Activated B cell treated with CpG ODN at 0.5 μM for 24 hours (primary cell): ENCODE measurements at regions of chr7 and their contacts with region 1.

Region 1: GRCh38 chr7:95527033-95527775 is 41.5 kb downstream of the ASB4 start:
- DNase-seq: no peak
- ATAC-seq: peak; percentile 68
- H3K4me3 Mint-ChIP-seq: no peak overlapping the region
- H3K27ac Mint-ChIP-seq: no peak overlapping the region
- H3K4me1 Mint-ChIP-seq: peaks cover 3% of the 10 kb centered on the region
- H3K27me3 Mint-ChIP-seq: peaks cover 5% of the 10 kb centered on the region
- CTCF ChIP-seq: no peak

Region 2: DNA sequence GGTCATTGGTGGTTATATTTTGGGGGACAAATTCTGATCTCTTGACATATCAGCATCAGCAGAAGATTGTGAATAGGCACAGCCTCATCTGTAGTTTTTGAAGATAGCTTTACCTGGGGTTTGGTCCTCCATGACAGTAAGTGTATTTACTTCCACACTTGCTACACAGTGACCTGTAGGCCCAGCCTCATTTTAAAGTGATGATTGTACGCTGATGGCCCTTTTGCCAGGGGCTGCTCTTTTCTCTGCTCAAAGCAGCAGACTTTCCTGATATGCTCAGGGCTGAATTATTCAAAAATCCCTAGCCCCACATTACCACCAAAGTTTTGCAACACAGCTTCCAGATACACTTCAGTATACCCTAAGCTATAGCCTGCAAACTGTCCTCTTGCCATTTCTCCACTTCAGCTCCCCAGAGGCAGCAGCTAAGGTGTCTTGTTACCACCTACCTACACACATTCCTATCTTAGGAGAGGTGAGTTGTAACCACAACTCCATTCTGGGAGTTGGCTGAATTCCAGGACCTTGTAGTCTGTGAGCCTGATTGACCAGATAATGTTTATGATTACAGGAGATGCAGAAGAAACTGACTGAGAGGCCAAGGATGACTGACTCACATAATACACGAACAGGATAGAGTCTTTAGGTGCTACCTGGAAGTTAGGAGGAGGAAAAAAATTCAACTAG is 35.4 kb before region 1 on chr7:
- CTCF ChIA-PET with region 1: no interaction called
- POLR2A ChIA-PET with region 1: no interaction called
- intact Hi-C with region 1: no loop called
- DNase-seq: no peak
- ATAC-seq: no peak
- H3K4me3 Mint-ChIP-seq: no peak overlapping the region
- H3K27ac Mint-ChIP-seq: no peak overlapping the region
- H3K4me1 Mint-ChIP-seq: no peaks in the 10 kb centered on the region
- H3K27me3 Mint-ChIP-seq: no peaks in the 10 kb centered on the region
- CTCF ChIP-seq: no peak

Region 3: GRCh38 chr7:95511716-95512260 is 15.4 kb before region 1 on chr7:
- CTCF ChIA-PET with region 1: interaction called, 19 read pairs
- POLR2A ChIA-PET with region 1: no interaction called
- intact Hi-C with region 1: loop called (anchors 1 kb)
- DNase-seq: peak; percentile 22
- ATAC-seq: peak; percentile 95
- H3K4me3 Mint-ChIP-seq: peak overlapping the region; percentile 21
- H3K27ac Mint-ChIP-seq: no peak overlapping the region
- H3K4me1 Mint-ChIP-seq: peaks cover 9% of the 10 kb centered on the region
- H3K27me3 Mint-ChIP-seq: peaks cover 8% of the 10 kb centered on the region
- CTCF ChIP-seq: no peak

Region 4: DNA sequence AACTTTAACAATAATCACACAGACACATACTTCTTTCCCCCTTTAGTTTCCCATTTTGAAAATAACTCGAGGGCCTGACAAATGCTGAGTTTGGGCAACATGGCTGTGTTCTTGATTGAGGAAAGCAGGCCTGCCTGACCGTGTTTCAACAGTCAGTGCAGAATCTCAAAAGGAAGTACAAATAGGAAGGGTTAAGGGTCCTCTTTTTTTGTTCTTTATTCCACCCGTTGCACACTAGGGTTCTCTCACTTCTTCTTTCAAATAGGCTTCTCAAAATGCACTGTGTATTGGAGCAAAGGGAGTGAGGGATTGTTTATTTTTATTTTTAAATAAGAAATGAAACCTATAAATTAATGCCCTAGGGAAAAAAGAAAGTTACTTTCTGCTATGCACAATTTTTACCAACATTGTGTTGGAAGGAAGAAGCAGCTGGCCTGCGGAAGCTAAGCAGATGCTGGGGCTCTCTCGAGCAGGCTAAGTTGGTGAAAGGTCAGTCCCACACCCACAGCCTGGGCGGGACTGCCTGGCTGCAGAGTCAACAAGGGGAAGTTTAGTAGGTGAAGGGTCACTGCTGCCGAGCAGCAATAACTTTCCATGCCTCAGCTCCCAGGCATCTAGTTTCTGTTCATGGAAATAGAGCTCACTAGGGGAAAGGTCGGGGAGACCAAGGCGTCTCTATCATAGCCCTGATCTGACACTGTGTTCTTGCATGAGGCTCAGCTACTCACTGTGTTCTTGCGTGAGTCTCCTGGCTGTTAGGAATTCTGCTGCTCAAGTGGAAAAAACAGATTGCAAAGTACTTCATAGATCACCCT is 81.4 kb after region 1 on chr7:
- CTCF ChIA-PET with region 1: no interaction called
- POLR2A ChIA-PET with region 1: no interaction called
- intact Hi-C with region 1: loop called (anchors 5 kb)
- DNase-seq: peak; percentile 49
- ATAC-seq: peak; percentile 89
- H3K4me3 Mint-ChIP-seq: peak overlapping the region; percentile 81
- H3K27ac Mint-ChIP-seq: peak overlapping the region; percentile 91
- H3K4me1 Mint-ChIP-seq: peaks cover 67% of the 10 kb centered on the region
- H3K27me3 Mint-ChIP-seq: no peaks in the 10 kb centered on the region
- CTCF ChIP-seq: no peak

Region 5: DNA sequence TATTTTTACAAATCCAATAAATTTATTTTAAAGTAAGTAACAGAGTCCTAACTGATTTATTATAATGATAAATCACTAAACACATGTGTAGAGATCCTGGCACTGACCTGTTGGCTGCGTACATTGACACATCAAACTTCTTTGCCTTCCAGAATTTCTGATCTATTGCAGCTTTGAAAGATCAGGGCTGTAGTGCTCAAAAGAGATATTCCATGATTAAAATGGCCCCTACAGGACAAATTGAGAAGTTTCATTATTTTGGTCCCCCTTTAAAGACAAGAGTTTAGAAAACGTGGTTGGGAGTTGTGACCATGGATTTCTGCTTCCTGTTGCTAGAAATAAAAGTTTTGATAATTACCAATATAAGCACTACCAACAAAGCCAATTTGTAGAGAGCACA is 156.8 kb after region 1 on chr7:
- CTCF ChIA-PET with region 1: interaction called, 324 read pairs
- POLR2A ChIA-PET with region 1: no interaction called
- intact Hi-C with region 1: loop called (anchors 1 kb)
- DNase-seq: no peak
- ATAC-seq: no peak
- H3K4me3 Mint-ChIP-seq: no peak overlapping the region
- H3K27ac Mint-ChIP-seq: no peak overlapping the region
- H3K4me1 Mint-ChIP-seq: no peaks in the 10 kb centered on the region
- H3K27me3 Mint-ChIP-seq: no peaks in the 10 kb centered on the region
- CTCF ChIP-seq: no peak

Region 6: DNA sequence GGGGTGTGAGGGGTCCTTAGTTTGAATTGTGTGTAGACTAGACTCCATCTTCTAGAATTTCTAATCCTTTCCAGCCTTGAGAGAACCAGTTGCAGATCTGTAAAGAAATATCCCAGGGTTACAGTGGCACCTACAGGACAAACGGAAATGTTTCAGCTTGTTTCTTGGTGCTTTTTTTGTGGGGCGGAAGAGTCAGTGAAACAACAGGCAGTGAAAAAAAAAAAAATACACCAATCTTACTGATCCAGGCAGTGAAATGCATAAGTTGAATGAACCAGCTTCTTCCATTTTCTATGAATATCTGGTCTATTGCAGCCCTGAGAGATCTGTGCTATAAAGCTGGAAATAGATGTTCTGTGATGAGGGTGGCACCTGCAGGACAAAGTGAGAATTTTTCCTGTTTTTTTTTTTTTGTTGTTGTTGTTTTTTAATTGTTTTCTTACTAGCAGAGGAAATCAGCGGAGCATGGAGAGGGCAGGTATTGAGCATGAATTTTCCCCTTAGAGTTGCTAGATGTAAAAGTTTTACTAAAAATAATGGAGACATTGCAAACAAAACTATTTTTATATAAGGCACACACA is 163.3 kb after region 1 on chr7:
- CTCF ChIA-PET with region 1: interaction called, 324 read pairs
- POLR2A ChIA-PET with region 1: no interaction called
- intact Hi-C with region 1: loop called (anchors 1 kb)
- DNase-seq: no peak
- ATAC-seq: peak; percentile 72
- H3K4me3 Mint-ChIP-seq: peak overlapping the region; percentile 2
- H3K27ac Mint-ChIP-seq: no peak overlapping the region
- H3K4me1 Mint-ChIP-seq: peaks cover 4% of the 10 kb centered on the region
- H3K27me3 Mint-ChIP-seq: peaks cover 3% of the 10 kb centered on the region
- CTCF ChIP-seq: peak; percentile 87

Region 7: GRCh38 chr7:95871078-95871782 is 344.0 kb after region 1 on chr7:
- CTCF ChIA-PET with region 1: interaction called, 7 read pairs
- POLR2A ChIA-PET with region 1: no interaction called
- intact Hi-C with region 1: loop called (anchors 1 kb)
- DNase-seq: no peak
- ATAC-seq: no peak
- H3K4me3 Mint-ChIP-seq: no peak overlapping the region
- H3K27ac Mint-ChIP-seq: no peak overlapping the region
- H3K4me1 Mint-ChIP-seq: no peaks in the 10 kb centered on the region
- H3K27me3 Mint-ChIP-seq: peaks cover 7% of the 10 kb centered on the region
- CTCF ChIP-seq: no peak